Tibial artery (tissue), 4 donors: ENCODE measurements at regions of chr14 and their contacts with region 1.

Region 1: GRCh38 chr14:58107947-58108552 is 44.0 kb downstream of the ARMH4 start:
- DNase-seq: no peak
- H3K4me3 ChIP-seq: no peak overlapping the region
- H3K27ac ChIP-seq: no peak overlapping the region
- H3K4me1 ChIP-seq: no peaks in the 10 kb centered on the region
- H3K27me3 ChIP-seq: no peaks in the 10 kb centered on the region
- CTCF ChIP-seq: peak; percentile 80 to 83

Region 2: DNA sequence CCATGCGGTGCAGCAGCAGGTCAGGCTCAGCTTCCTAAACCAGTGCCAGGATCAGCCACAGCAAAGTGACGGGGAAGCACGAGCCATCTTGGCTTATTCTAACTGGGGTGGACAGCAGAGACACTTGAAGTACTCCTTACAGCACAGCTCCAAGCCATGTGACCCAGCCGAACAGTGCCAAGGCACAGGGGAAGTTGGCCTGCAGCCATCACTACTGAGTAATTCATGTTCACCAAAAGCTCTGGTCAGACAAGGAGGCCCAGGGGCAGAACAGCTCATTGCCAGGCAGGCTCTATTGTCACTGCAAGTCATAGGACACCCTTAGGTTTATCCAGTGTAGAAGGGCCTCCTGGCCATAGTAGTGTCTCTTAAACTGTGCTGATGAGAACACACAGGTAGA is 218.8 kb before region 1 on chr14:
- intact Hi-C with region 1: no loop called
- DNase-seq: peak; percentile 58 to 90
- H3K4me3 ChIP-seq: no peak overlapping the region
- H3K27ac ChIP-seq: no peak overlapping the region
- H3K4me1 ChIP-seq: peaks cover 0 to 7% (median 6%) of the 10 kb centered on the region in 4 donors
- H3K27me3 ChIP-seq: no peaks in the 10 kb centered on the region
- CTCF ChIP-seq: no peak

Region 3: DNA sequence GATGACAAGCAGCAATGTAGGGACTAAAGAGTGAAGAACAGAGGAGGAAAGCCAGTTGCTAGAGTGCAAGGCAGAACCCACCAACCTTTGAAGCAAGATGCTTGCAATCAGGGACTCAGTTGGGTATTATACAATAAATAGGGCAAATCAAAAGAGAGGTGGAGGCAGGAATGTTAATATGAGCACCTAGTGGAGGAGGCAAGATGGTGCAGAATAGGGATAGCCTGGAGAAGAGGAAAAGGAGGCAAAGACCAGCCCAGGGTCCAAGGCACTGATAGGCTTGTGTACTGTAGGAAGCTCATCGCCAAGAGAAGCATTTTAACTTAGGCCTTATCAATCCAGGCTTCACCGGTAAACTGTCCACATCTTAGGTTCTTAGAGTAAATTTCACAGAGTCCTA is 93.3 kb before region 1 on chr14:
- intact Hi-C with region 1: no loop called
- DNase-seq: no peak
- H3K4me3 ChIP-seq: no peak overlapping the region
- H3K27ac ChIP-seq: no peak overlapping the region
- H3K4me1 ChIP-seq: no peaks in the 10 kb centered on the region
- H3K27me3 ChIP-seq: no peaks in the 10 kb centered on the region
- CTCF ChIP-seq: no peak

Region 4: DNA sequence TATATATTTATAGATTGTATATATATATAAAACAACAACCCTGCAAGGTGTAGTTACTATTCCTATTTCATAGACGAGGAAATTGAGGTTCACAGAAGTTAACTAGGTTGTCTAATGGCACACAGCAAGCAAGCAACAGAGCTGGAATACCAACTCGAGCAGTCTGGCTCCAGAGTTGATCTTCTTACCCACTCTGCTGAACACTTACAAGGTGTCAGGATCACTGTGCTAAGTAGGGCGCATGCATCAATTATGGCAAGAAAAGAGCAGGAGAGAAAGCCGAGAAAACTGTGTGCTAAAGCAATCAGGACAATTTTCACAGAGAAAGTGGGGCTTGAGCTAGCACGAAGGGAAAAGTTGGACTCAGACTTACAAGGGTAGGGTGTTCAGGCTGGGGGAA is 59.8 kb after region 1 on chr14:
- intact Hi-C with region 1: loop called (anchors 2 kb)
- DNase-seq: no peak
- H3K4me3 ChIP-seq: no peak overlapping the region
- H3K27ac ChIP-seq: no peak overlapping the region
- H3K4me1 ChIP-seq: peaks cover 0 to 7% (median 0%) of the 10 kb centered on the region in 4 donors
- H3K27me3 ChIP-seq: no peaks in the 10 kb centered on the region
- CTCF ChIP-seq: no peak